ENCODE measurements at regions of chr1 and their contacts with region 1.

Region 1: GRCh38 chr1:113072757-113073478 is at the start of gene LRIG2:
- DNase-seq: peak; percentile 90
- H3K4me3 ChIP-seq: peak within 1 kb of the TSS; percentile 69
- H3K27me3 ChIP-seq: no peaks in the 10 kb centered on the region
- CTCF ChIP-seq: peak; percentile 92
- polyA plus RNA-seq, gene LRIG2: 5.3 and 7.1 TPM in 2 replicates

Region 2: DNA sequence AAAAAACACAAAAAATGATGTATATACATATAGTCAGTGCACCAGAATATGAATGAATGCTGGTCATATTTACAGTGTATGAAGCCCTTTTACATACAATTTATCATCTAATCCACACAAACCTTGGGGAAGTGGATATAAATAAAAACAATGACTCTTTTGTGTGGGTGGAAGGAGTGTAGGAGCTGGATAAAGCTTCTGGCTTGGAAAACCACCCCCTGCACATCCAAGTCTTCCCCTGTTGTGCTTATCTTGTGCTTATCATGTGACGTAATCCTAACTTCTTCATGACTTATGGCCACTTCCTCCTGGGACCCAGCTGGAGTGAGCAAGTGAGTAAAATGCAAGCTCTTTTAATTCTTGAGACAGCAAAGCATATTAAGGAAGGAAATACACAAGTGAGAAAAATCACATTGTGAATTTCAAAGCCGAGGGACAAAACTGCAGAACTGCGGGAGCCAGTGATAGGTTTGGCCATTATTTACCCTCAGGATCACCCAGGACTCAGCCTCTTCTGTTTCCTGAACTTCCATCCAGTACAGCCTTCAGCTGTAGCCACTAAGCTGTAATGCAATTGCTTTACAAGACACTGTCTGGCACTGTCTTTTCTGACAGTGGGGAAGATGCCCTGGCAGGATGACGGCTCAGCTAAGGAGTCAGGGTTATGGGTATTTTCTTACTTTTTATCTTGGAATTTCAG is 253.8 kb before region 1 on chr1:
- CTCF ChIA-PET with region 1: interaction called, 10 read pairs
- POLR2A ChIA-PET with region 1: no interaction called
- DNase-seq: no peak
- H3K4me3 ChIP-seq: no peak overlapping the region
- H3K27me3 ChIP-seq: no peaks in the 10 kb centered on the region
- CTCF ChIP-seq: no peak

Region 3: GRCh38 chr1:113042285-113043143 is 30.4 kb before region 1 on chr1:
- CTCF ChIA-PET with region 1: interaction called, 37 read pairs
- POLR2A ChIA-PET with region 1: no interaction called
- DNase-seq: peak; percentile 57
- H3K4me3 ChIP-seq: no peak overlapping the region
- H3K27me3 ChIP-seq: no peaks in the 10 kb centered on the region
- CTCF ChIP-seq: peak; percentile 67

Region 4: GRCh38 chr1:113086541-113086940 is 13.6 kb after region 1 on chr1:
- CTCF ChIA-PET with region 1: interaction called, 20 read pairs
- POLR2A ChIA-PET with region 1: no interaction called
- DNase-seq: no peak
- H3K4me3 ChIP-seq: no peak overlapping the region
- H3K27me3 ChIP-seq: no peaks in the 10 kb centered on the region
- CTCF ChIP-seq: no peak

Region 5: GRCh38 chr1:113106910-113107309 is 34.0 kb after region 1 on chr1:
- CTCF ChIA-PET with region 1: no interaction called
- POLR2A ChIA-PET with region 1: no interaction called
- DNase-seq: no peak
- H3K4me3 ChIP-seq: no peak overlapping the region
- H3K27me3 ChIP-seq: no peaks in the 10 kb centered on the region
- CTCF ChIP-seq: no peak

Region 6: DNA sequence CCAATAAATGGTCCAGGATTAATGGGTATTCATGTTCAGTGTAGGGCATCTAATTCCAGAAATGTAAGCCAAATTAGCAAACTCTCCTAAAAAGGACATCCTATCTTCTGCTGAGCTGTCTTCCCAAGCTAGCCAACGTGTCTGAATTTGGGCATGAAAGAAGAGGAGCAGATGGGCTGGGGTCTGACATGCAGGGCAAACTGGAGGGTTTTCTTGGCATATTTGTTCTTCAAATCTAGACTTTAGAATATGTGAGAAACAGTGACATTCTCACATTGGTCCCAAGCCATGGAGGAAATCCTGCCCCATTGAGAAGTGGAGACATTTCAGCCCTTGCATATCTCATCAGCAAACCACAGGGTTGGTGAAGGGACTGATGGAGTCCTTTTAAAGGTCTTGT is 67.3 kb after region 1 on chr1:
- CTCF ChIA-PET with region 1: no interaction called
- POLR2A ChIA-PET with region 1: no interaction called
- DNase-seq: no peak
- H3K4me3 ChIP-seq: no peak overlapping the region
- H3K27me3 ChIP-seq: no peaks in the 10 kb centered on the region
- CTCF ChIP-seq: no peak